Common myeloid progenitor, CD34-positive (primary cell): ENCODE measurements at regions of chr4 and their contacts with region 1.

Region 1: DNA sequence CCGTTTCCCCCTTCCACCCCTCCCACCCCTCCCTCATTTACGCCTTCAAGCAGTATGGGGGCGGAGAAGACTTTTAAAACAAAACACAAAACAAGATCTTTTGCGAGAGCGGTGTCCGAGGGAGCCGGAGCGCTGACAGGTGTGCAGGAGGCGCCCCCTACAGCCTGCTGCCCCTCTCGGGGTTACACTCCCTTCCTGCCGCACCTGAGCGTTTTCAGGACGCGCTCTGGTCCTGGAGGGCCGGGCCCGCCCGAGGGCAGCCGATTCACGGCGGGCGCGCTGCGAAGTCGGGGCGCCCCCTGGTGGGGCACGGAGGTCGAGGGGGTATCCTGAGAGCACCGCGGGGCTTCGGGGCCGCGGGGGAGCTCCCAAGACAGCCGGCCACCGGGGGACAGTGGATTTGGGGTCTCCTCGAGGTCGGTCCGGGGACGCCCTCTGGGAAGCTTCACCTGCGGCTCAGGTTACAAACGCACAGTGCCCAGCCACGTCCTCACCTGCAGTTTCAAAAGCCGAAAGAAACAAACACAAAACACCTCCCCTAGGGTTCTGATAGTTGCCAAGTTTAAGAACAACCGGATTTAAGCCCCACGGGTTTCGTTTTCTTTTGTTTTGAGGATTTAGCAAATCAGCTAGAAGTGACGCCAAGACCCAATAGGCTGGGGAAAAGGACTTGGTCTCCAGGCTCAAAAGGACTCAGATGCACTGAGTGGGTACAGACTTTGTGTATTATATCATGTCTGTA is 8.0 kb upstream of the NEUROG2 start:
- DNase-seq: peak; percentile 64 to 72 (median 71)
- H3K4me3 ChIP-seq: peak overlapping the region in 6 of 7 experiments; percentile 41 to 74 (median 62)
- H3K27ac ChIP-seq: no peak overlapping the region
- H3K4me1 ChIP-seq: peaks cover 5 to 26% (median 16%) of the 10 kb centered on the region in 4 experiments
- H3K27me3 ChIP-seq: peaks cover 30 to 94% (median 57%) of the 10 kb centered on the region in 5 experiments

Region 2: GRCh38 chr4:112327965-112328733 is 195.8 kb before region 1 on chr4:
- CTCF ChIA-PET with region 1: interaction called, 20 read pairs
- POLR2A ChIA-PET with region 1: no interaction called
- DNase-seq: peak; percentile 61 to 83 (median 77)
- H3K4me3 ChIP-seq: no peak overlapping the region
- H3K27ac ChIP-seq: no peak overlapping the region
- H3K4me1 ChIP-seq: no peaks in the 10 kb centered on the region
- H3K27me3 ChIP-seq: no peaks in the 10 kb centered on the region

Region 3: GRCh38 chr4:112509243-112510141 is 14.4 kb before region 1 on chr4:
- CTCF ChIA-PET with region 1: interaction called, 27 read pairs
- POLR2A ChIA-PET with region 1: no interaction called
- DNase-seq: peak in 1 of 3 donors; percentile 50
- H3K4me3 ChIP-seq: peak overlapping the region in 1 of 7 experiments; percentile 45
- H3K27ac ChIP-seq: no peak overlapping the region
- H3K4me1 ChIP-seq: peaks cover 0 to 23% (median 19%) of the 10 kb centered on the region in 4 experiments
- H3K27me3 ChIP-seq: peaks cover 42 to 96% (median 70%) of the 10 kb centered on the region in 5 experiments

Region 4: GRCh38 chr4:112536123-112536522 is 12.2 kb after region 1 on chr4:
- CTCF ChIA-PET with region 1: interaction called, 16 read pairs
- POLR2A ChIA-PET with region 1: no interaction called
- DNase-seq: no peak
- H3K4me3 ChIP-seq: no peak overlapping the region
- H3K27ac ChIP-seq: no peak overlapping the region
- H3K4me1 ChIP-seq: no peaks in the 10 kb centered on the region
- H3K27me3 ChIP-seq: peaks cover 0 to 4% (median 0%) of the 10 kb centered on the region in 5 experiments